ENCODE measurements at regions of chr5 and their contacts with region 1.

Region 1: GRCh38 chr5:31889001-31889561 is 250.2 kb downstream of the PDZD2 start:
- DNase-seq: no peak
- H3K4me3 ChIP-seq: no peak overlapping the region
- H3K27ac ChIP-seq: no peak overlapping the region
- H3K4me1 ChIP-seq: no peaks in the 10 kb centered on the region
- H3K27me3 ChIP-seq: no peaks in the 10 kb centered on the region
- CTCF ChIP-seq: no peak
- POLR2A ChIP-seq: no peak

Region 2: GRCh38 chr5:31911291-31912265 is 22.5 kb after region 1 on chr5:
- intact Hi-C with region 1: loop called (anchors 1 kb)
- DNase-seq: no peak
- H3K4me3 ChIP-seq: peak overlapping the region in 2 of 3 donors; percentile 16 to 43
- H3K27ac ChIP-seq: no peak overlapping the region
- H3K4me1 ChIP-seq: no peaks in the 10 kb centered on the region
- H3K27me3 ChIP-seq: no peaks in the 10 kb centered on the region
- CTCF ChIP-seq: no peak
- POLR2A ChIP-seq: no peak

Measured in breast epithelium (tissue), 4 donors.